A673 (cell line): ENCODE measurements at regions of chr14 and their contacts with region 1.

Region 1: GRCh38 chr14:99853206-99853605 is 60.0 kb downstream of the EML1 start:
- DNase-seq: no peak
- H3K4me3 ChIP-seq: no peak overlapping the region
- H3K27ac ChIP-seq: no peak overlapping the region
- H3K4me1 ChIP-seq: no peaks in the 10 kb centered on the region
- H3K27me3 ChIP-seq: no peaks in the 10 kb centered on the region
- CTCF ChIP-seq: no peak

Region 2: GRCh38 chr14:99840774-99841305 is 12.4 kb before region 1 on chr14:
- CTCF ChIA-PET with region 1: interaction called, 12 read pairs
- POLR2A ChIA-PET with region 1: no interaction called
- intact Hi-C with region 1: no loop called
- DNase-seq: no peak
- H3K4me3 ChIP-seq: no peak overlapping the region
- H3K27ac ChIP-seq: no peak overlapping the region
- H3K4me1 ChIP-seq: peaks cover 8% of the 10 kb centered on the region
- H3K27me3 ChIP-seq: no peaks in the 10 kb centered on the region
- CTCF ChIP-seq: no peak